AG04450 (cell line): ENCODE measurements at regions of chr13 and their contacts with region 1.

Region 1: GRCh38 chr13:39616087-39616694 is 13.2 kb upstream of the LHFPL6 start:
- DNase-seq: peak; percentile 33
- H3K4me3 ChIP-seq: no peak overlapping the region
- H3K27ac ChIP-seq: no peak overlapping the region
- H3K27me3 ChIP-seq: peaks cover 2% of the 10 kb centered on the region
- CTCF ChIP-seq: peak; percentile 98

Region 2: GRCh38 chr13:39154041-39154440 is 462.1 kb before region 1 on chr13:
- CTCF ChIA-PET with region 1: interaction called, 203 read pairs
- POLR2A ChIA-PET with region 1: no interaction called
- DNase-seq: no peak
- H3K4me3 ChIP-seq: no peak overlapping the region
- H3K27ac ChIP-seq: no peak overlapping the region
- H3K27me3 ChIP-seq: no peaks in the 10 kb centered on the region
- CTCF ChIP-seq: no peak

Region 3: GRCh38 chr13:39273953-39274738 is 342.0 kb before region 1 on chr13:
- CTCF ChIA-PET with region 1: interaction called, 21 read pairs
- POLR2A ChIA-PET with region 1: no interaction called
- DNase-seq: no peak
- H3K4me3 ChIP-seq: no peak overlapping the region
- H3K27ac ChIP-seq: no peak overlapping the region
- H3K27me3 ChIP-seq: no peaks in the 10 kb centered on the region
- CTCF ChIP-seq: peak; percentile 26

Region 4: GRCh38 chr13:39341251-39341650 is 274.9 kb before region 1 on chr13:
- CTCF ChIA-PET with region 1: interaction called, 10 read pairs
- POLR2A ChIA-PET with region 1: no interaction called
- DNase-seq: no peak
- H3K4me3 ChIP-seq: no peak overlapping the region
- H3K27ac ChIP-seq: no peak overlapping the region
- H3K27me3 ChIP-seq: no peaks in the 10 kb centered on the region
- CTCF ChIP-seq: no peak

Region 5: GRCh38 chr13:39527961-39528660 is 88.1 kb before region 1 on chr13:
- CTCF ChIA-PET with region 1: interaction called, 12 read pairs
- POLR2A ChIA-PET with region 1: no interaction called
- DNase-seq: peak; percentile 85
- H3K4me3 ChIP-seq: peak overlapping the region; percentile 23
- H3K27ac ChIP-seq: peak overlapping the region; percentile 86
- H3K27me3 ChIP-seq: no peaks in the 10 kb centered on the region
- CTCF ChIP-seq: no peak

Region 6: GRCh38 chr13:39676315-39676876 is 60.2 kb after region 1 on chr13:
- CTCF ChIA-PET with region 1: interaction called, 10 read pairs
- POLR2A ChIA-PET with region 1: no interaction called
- DNase-seq: no peak
- H3K4me3 ChIP-seq: no peak overlapping the region
- H3K27ac ChIP-seq: no peak overlapping the region
- H3K27me3 ChIP-seq: no peaks in the 10 kb centered on the region
- CTCF ChIP-seq: peak; percentile 50

Region 7: GRCh38 chr13:40102856-40103255 is 486.7 kb after region 1 on chr13:
- CTCF ChIA-PET with region 1: no interaction called
- POLR2A ChIA-PET with region 1: no interaction called
- DNase-seq: peak; percentile 26
- H3K4me3 ChIP-seq: no peak overlapping the region
- H3K27ac ChIP-seq: no peak overlapping the region
- H3K27me3 ChIP-seq: no peaks in the 10 kb centered on the region
- CTCF ChIP-seq: no peak